ENCODE measurements at regions of chr12 and their contacts with region 1.

Region 1: GRCh38 chr12:14885718-14886221 is at the start of gene MGP:
- DNase-seq: peak; percentile 63
- ATAC-seq: peak; percentile 84 to 90
- total RNA-seq, gene MGP: 1,159 to 1,325 TPM

Region 2: DNA sequence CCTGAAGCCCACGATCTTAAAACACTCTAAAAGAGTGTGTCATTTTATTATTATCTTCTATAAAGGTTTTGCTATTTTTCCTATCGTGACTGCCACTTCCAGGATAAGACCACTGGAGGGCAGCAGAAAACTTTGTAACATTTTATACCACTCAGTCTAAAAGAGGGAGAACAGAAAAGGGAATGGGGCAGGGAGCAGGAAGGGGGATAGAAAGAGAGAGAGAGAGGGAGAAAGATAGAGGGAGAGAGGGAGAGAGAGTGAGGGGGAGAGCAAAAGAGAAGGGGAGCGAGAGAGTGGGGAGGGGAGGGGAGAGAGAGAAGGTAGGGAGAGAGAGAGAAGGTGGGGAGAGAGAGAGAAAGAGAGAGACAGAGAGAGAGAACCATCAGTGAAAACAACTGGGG is 40.4 kb before region 1 on chr12:
- intact Hi-C with region 1: loop called in 1 of 2 experiments (anchors 5 kb)
- DNase-seq: peak; percentile 35
- ATAC-seq: peak; percentile 48 to 59

Region 3: GRCh38 chr12:14928969-14929368 is 43.2 kb after region 1 on chr12:
- intact Hi-C with region 1: no loop called
- DNase-seq: no peak
- ATAC-seq: peak in 1 of 2 donors; percentile 48

Region 4: DNA sequence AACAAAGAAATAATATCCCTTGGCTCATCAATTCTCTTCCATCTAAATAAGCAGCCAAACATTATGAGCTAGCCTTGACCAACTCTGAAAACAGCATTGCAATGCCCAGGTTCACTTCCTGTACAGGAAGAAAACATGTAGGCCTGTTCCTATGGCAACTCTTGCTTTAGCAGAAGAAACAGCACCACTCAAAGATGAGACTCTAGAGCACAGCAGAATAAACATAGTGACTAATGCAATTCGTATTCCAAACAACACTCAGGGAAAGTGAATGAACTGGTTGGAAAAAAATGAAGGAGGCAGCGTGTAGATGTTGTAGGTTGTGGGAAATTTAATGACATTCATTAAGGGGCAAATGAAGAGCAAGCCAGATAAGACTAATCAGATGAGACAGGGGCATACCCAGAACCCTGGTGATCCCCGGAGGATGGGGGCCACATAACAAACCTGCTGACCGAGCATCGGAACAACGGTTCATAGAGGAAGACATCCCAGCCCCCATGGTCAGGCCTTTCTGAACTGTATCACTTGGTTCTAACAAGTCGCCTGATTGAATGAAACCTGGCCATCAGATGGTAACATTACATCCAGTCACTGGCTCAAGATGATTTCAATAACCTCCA is 66.6 kb after region 1 on chr12:
- intact Hi-C with region 1: loop called in 1 of 2 experiments (anchors 5 kb)
- DNase-seq: no peak
- ATAC-seq: peak; percentile 62 to 91

Region 5: DNA sequence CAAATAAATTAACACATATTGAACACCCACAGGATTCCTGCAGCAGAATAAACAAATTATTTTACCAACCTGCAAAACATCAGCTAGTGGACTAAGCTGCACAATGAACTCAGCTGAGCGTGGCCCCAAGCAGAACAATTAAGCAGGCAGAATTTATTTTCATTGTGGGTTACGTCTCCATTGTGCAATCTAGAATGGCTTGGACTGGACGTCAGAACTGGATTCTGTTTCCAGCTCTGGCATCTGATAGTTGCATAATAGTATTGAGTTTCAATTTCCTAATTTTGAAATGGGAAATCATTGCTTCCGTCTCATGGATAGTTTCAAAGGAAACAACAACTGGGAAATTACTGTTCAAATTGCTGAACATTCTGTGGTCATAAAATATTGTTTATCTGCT is 371.0 kb after region 1 on chr12:
- intact Hi-C with region 1: no loop called
- DNase-seq: no peak
- ATAC-seq: peak; percentile 53 to 90